Activated naive CD4-positive, alpha-beta T cell treated with anti-CD3 and anti-CD28 coated beads for 36 hours (primary cell): ENCODE measurements at regions of chr4 and their contacts with region 1.

Region 1: GRCh38 chr4:80125252-80126177 is 52.5 kb upstream of the ANTXR2 start:
- DNase-seq: peak; percentile 39
- H3K4me3 Mint-ChIP-seq: no peak overlapping the region
- H3K27ac Mint-ChIP-seq: peak overlapping the region; percentile 17
- H3K4me1 Mint-ChIP-seq: peaks cover 49% of the 10 kb centered on the region
- H3K27me3 Mint-ChIP-seq: no peaks in the 10 kb centered on the region

Region 2: GRCh38 chr4:78938868-78939666 is 1186.4 kb before region 1 on chr4 and contains the start of gene PAQR3:
- CTCF ChIA-PET with region 1: no interaction called
- intact Hi-C with region 1: loop called (anchors 5 kb)
- DNase-seq: peak; percentile 82
- H3K4me3 Mint-ChIP-seq: peak within 1 kb of the TSS; percentile 92
- H3K27ac Mint-ChIP-seq: peak within 1 kb of the TSS; percentile 50
- H3K4me1 Mint-ChIP-seq: peaks cover 28% of the 10 kb centered on the region
- H3K27me3 Mint-ChIP-seq: peaks cover 2% of the 10 kb centered on the region
- total RNA-seq, gene PAQR3: 12.4 to 13.9 TPM

Region 3: GRCh38 chr4:79053754-79054153 is 1071.8 kb before region 1 on chr4:
- CTCF ChIA-PET with region 1: no interaction called
- intact Hi-C with region 1: no loop called
- DNase-seq: no peak
- H3K4me3 Mint-ChIP-seq: no peak overlapping the region
- H3K27ac Mint-ChIP-seq: no peak overlapping the region
- H3K4me1 Mint-ChIP-seq: no peaks in the 10 kb centered on the region
- H3K27me3 Mint-ChIP-seq: peaks cover 7% of the 10 kb centered on the region

Region 4: DNA sequence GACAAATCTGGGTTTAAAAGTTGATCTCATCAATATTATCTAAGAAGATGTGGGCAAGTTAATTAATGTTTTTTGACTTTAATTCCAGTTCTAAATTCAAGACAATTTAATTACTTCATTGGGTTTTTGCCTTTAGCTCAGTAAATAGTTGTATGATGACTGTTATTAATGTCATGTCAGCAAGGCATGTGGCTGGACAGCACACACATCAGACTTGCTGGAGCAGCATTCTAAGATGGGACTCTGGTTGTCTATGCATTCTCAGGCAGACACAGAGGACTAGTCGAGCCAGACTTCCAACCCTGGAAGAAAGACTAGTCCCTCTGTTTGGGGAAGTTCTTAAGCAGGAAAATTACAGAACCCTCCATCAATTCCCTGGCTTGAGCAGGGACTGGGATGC is 536.8 kb before region 1 on chr4:
- CTCF ChIA-PET with region 1: no interaction called
- intact Hi-C with region 1: no loop called
- DNase-seq: no peak
- H3K4me3 Mint-ChIP-seq: no peak overlapping the region
- H3K27ac Mint-ChIP-seq: no peak overlapping the region
- H3K4me1 Mint-ChIP-seq: no peaks in the 10 kb centered on the region
- H3K27me3 Mint-ChIP-seq: peaks cover 4% of the 10 kb centered on the region

Region 5: GRCh38 chr4:80007745-80008149 is 117.8 kb before region 1 on chr4:
- CTCF ChIA-PET with region 1: no interaction called
- intact Hi-C with region 1: loop called (anchors 2 kb)
- DNase-seq: no peak
- H3K4me3 Mint-ChIP-seq: no peak overlapping the region
- H3K27ac Mint-ChIP-seq: no peak overlapping the region
- H3K4me1 Mint-ChIP-seq: peaks cover 38% of the 10 kb centered on the region
- H3K27me3 Mint-ChIP-seq: no peaks in the 10 kb centered on the region

Region 6: DNA sequence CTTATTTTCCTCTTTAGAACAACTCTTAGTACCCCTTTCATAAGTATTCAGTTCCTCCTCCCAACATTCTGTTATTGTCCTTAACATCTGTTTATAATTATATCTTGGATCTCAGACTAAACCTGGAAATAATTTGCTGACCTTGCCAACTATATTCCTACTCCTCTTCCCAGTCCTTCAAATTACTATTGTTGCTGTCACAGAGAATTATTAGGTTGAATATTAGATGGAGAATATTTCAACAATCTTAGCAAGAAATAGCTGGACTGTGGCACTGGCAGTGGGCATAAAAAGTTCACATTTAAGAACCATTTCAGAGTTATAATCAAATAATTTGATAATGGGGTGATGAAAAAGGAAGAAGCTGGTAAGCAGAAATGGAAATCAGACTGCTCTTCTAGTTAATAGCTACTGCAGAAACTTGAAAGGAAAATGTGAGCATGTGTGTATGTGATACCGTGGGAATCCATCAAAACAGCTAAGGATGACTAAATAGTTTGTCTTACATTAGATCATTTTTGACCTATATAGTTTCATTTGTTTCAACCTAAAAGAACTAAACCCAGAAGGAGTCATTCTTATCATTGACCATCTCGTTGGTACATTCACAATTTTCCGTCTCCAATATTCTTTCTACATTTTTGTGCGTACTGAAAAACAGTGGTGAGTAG is 28.5 kb after region 1 on chr4:
- CTCF ChIA-PET with region 1: interaction called, 7 read pairs
- intact Hi-C with region 1: loop called (anchors 1 kb)
- DNase-seq: no peak
- H3K4me3 Mint-ChIP-seq: no peak overlapping the region
- H3K27ac Mint-ChIP-seq: no peak overlapping the region
- H3K4me1 Mint-ChIP-seq: peaks cover 21% of the 10 kb centered on the region
- H3K27me3 Mint-ChIP-seq: no peaks in the 10 kb centered on the region

Region 7: GRCh38 chr4:80202190-80202711 is 76.7 kb after region 1 on chr4:
- CTCF ChIA-PET with region 1: interaction called, 18 read pairs
- intact Hi-C with region 1: loop called (anchors 1 kb)
- DNase-seq: peak; percentile 79
- H3K4me3 Mint-ChIP-seq: peak overlapping the region; percentile 70
- H3K27ac Mint-ChIP-seq: no peak overlapping the region
- H3K4me1 Mint-ChIP-seq: peaks cover 20% of the 10 kb centered on the region
- H3K27me3 Mint-ChIP-seq: peaks cover 20% of the 10 kb centered on the region